Dendritic cell treated with granulocyte-macrophage colony-stimulating factor and Interleukin-4, amounts not matched to agents 40 ng/mL and 50 ng/mL, for 4 days (primary cell): ENCODE measurements at regions of chr20 and their contacts with region 1.

Region 1: DNA sequence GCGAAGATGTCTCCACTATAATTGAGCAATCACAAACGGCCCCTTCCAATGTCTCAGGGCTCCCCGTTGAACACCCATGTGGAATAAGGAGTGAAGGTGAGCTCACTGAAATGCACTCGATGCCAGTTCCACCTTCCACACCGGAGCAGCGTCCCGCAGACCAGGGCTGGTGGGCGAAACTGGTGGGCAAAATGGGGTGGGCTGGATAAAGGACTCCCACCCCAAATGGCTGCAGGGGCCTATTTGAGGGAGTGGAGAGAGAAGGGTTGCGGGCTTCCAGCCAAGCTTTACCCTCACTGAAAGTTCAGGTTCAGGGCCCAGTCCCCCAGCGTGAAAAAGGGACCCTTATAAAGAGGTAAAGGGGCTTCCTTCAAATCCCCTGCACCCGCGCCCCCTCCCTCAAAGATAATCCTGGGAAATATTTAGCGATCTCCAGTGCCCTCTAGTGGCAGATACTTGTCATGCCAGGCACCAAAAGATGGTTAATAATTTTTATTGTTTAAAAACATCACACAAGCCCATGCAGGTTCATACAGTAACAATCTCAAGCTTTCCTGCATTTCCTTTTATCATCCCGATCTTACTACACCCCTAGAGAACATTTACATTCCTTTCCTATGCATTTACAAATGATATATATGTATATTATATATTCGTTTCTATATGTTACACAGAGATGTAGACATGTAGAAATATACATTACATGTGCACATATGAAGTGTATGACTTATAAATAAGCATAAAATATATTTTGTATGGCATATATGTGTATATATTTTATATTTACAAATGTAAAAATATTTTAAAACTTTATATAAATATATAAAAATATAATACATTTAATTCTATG is 58.2 kb upstream of the NKX2-2 start:
- H3K4me3 Mint-ChIP-seq: no peak overlapping the region
- H3K27ac Mint-ChIP-seq: no peak overlapping the region
- H3K4me1 Mint-ChIP-seq: peaks cover 14% of the 10 kb centered on the region
- H3K27me3 Mint-ChIP-seq: peaks cover 40% of the 10 kb centered on the region

Region 2: DNA sequence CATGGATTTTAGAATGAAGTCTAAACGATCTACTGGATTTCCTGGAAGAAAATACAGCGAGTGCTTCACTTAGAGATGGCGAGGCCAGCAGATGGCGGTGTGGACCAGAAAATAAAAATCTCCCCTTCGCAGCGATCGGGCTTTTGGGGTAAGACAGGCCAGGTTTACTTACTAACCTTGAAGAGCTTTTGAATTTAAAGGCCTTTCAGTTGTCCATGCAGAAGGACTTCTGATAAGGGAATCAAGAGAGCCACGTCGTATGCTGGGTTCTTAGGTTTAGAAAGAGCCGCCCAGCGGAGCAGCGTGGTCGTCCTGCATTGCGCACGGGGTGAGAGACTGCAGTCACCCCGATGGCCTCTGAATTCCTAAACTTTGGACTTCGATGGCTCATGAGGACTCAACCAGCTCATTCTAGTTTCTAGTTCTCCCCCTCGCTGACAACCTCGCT is 734.5 kb before region 1 on chr20:
- intact Hi-C with region 1: loop called (anchors 5 kb)
- H3K4me3 Mint-ChIP-seq: no peak overlapping the region
- H3K27ac Mint-ChIP-seq: no peak overlapping the region
- H3K4me1 Mint-ChIP-seq: no peaks in the 10 kb centered on the region
- H3K27me3 Mint-ChIP-seq: peaks cover 22% of the 10 kb centered on the region

Region 3: GRCh38 chr20:20860078-20860806 is 711.8 kb before region 1 on chr20:
- intact Hi-C with region 1: loop called (anchors 2 kb)
- H3K4me3 Mint-ChIP-seq: no peak overlapping the region
- H3K27ac Mint-ChIP-seq: no peak overlapping the region
- H3K4me1 Mint-ChIP-seq: no peaks in the 10 kb centered on the region
- H3K27me3 Mint-ChIP-seq: peaks cover 20% of the 10 kb centered on the region

Region 4: GRCh38 chr20:21235484-21236445 is 336.3 kb before region 1 on chr20:
- intact Hi-C with region 1: loop called (anchors 5 kb)
- H3K4me3 Mint-ChIP-seq: no peak overlapping the region
- H3K27ac Mint-ChIP-seq: no peak overlapping the region
- H3K4me1 Mint-ChIP-seq: peaks cover 3% of the 10 kb centered on the region
- H3K27me3 Mint-ChIP-seq: no peaks in the 10 kb centered on the region

Region 5: DNA sequence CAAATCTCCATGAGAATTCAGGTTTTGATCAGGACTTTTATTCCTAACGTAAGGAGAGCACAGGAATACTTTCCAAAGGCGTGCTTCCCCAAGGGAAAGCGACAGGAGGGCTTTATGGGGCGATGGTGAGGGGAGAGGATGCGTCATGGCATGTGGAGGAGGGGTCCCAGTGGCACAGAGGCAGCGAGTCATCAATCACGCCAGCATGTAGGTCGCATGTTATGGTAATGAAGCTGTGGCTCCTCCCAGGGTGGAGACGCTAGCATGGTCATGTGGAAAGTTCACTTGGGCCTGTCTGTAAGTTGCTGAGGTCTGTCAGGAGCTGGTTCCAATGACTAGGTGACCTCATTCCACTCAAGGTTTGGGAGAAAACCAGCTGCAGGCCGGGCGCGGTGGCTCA is 98.1 kb after region 1 on chr20:
- intact Hi-C with region 1: no loop called
- H3K4me3 Mint-ChIP-seq: no peak overlapping the region
- H3K27ac Mint-ChIP-seq: no peak overlapping the region
- H3K4me1 Mint-ChIP-seq: no peaks in the 10 kb centered on the region
- H3K27me3 Mint-ChIP-seq: no peaks in the 10 kb centered on the region